ENCODE measurements at regions of chr9 and their contacts with region 1.

Region 1: GRCh38 chr9:72871685-72872084 is 81.2 kb downstream of the ALDH1A1 start:
- DNase-seq: peak; percentile 41
- H3K27ac ChIP-seq: no peak overlapping the region
- CTCF ChIP-seq: peak; percentile 48

Region 2: GRCh38 chr9:73023025-73023541 is 151.4 kb after region 1 on chr9:
- CTCF ChIA-PET with region 1: interaction called, 64 read pairs
- POLR2A ChIA-PET with region 1: no interaction called
- DNase-seq: peak; percentile 64
- H3K27ac ChIP-seq: no peak overlapping the region
- CTCF ChIP-seq: peak; percentile 91

Region 3: GRCh38 chr9:73050065-73050816 is 178.6 kb after region 1 on chr9:
- CTCF ChIA-PET with region 1: interaction called, 11 read pairs
- POLR2A ChIA-PET with region 1: no interaction called
- DNase-seq: no peak
- H3K27ac ChIP-seq: no peak overlapping the region
- CTCF ChIP-seq: no peak

Measured in RWPE1 (cell line).